Activated CD4-positive, alpha-beta T cell treated with anti-CD3 and anti-CD28 coated beads, Interleukin-2, amount 10 ng/mL, durations not matched to agents 7 days and 5 days (primary cell): ENCODE measurements at regions of chr12 and their contacts with region 1.

Region 1: GRCh38 chr12:112108201-112109079 is at the start of gene NAA25:
- DNase-seq: peak; percentile 91
- H3K4me3 Mint-ChIP-seq: peak within 1 kb of the TSS; percentile 97
- H3K27ac Mint-ChIP-seq: peak within 1 kb of the TSS; percentile 99
- H3K4me1 Mint-ChIP-seq: peaks cover 52% of the 10 kb centered on the region
- H3K27me3 Mint-ChIP-seq: no peaks in the 10 kb centered on the region
- total RNA-seq, gene NAA25: 29.9 to 31.0 TPM

Region 2: GRCh38 chr12:112046003-112046402 is 62.4 kb before region 1 on chr12:
- CTCF ChIA-PET with region 1: no interaction called
- POLR2A ChIA-PET with region 1: no interaction called
- DNase-seq: no peak
- H3K4me3 Mint-ChIP-seq: no peak overlapping the region
- H3K27ac Mint-ChIP-seq: no peak overlapping the region
- H3K4me1 Mint-ChIP-seq: no peaks in the 10 kb centered on the region
- H3K27me3 Mint-ChIP-seq: no peaks in the 10 kb centered on the region

Region 3: GRCh38 chr12:112096667-112097066 is 11.8 kb before region 1 on chr12:
- CTCF ChIA-PET with region 1: interaction called, 39 read pairs
- POLR2A ChIA-PET with region 1: interaction called, 4 read pairs
- DNase-seq: no peak
- H3K4me3 Mint-ChIP-seq: no peak overlapping the region
- H3K27ac Mint-ChIP-seq: peak overlapping the region; percentile 72
- H3K4me1 Mint-ChIP-seq: peaks cover 36% of the 10 kb centered on the region
- H3K27me3 Mint-ChIP-seq: no peaks in the 10 kb centered on the region

Region 4: GRCh38 chr12:112125250-112125999 is 17.0 kb after region 1 on chr12 and contains the start of gene TRAFD1:
- CTCF ChIA-PET with region 1: interaction called, 13 read pairs
- POLR2A ChIA-PET with region 1: interaction called, 7 read pairs
- DNase-seq: peak; percentile 99
- H3K4me3 Mint-ChIP-seq: peak within 1 kb of the TSS; percentile 92
- H3K27ac Mint-ChIP-seq: peak within 1 kb of the TSS; percentile 86
- H3K4me1 Mint-ChIP-seq: peaks cover 41% of the 10 kb centered on the region
- H3K27me3 Mint-ChIP-seq: peaks cover 5% of the 10 kb centered on the region
- total RNA-seq, gene TRAFD1: 68.9 to 70.4 TPM

Region 5: DNA sequence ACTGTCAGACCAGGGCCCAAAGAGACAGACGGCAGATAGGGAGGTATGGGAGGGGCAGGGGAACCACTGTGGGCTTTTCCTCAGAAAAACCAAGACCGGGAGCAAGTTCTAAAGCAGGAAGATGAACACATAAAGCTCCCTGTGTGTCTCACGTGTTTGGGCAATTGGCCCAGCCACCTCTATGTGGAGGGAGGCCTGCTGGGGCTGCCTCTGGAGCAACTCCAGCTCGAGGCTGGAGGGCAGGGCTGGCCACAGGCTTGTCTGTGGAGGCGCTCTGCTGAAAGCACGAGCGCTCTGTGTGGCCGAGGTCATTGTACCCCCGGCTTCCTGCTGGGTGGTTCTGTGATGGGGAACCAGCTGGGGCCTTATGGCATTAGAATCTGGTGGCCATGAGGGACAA is 53.3 kb after region 1 on chr12:
- CTCF ChIA-PET with region 1: no interaction called
- POLR2A ChIA-PET with region 1: no interaction called
- DNase-seq: no peak
- H3K4me3 Mint-ChIP-seq: no peak overlapping the region
- H3K27ac Mint-ChIP-seq: peak overlapping the region; percentile 36
- H3K4me1 Mint-ChIP-seq: peaks cover 25% of the 10 kb centered on the region
- H3K27me3 Mint-ChIP-seq: no peaks in the 10 kb centered on the region